GM12878 (cell line): ENCODE measurements at regions of chr22 and their contacts with region 1.

Region 1: GRCh38 chr22:21712894-21713712 is 22.5 kb downstream of the YPEL1 start:
- DNase-seq: peak; percentile 25
- ATAC-seq: peak; percentile 97
- H3K4me3 ChIP-seq: no peak overlapping the region
- H3K27ac ChIP-seq: no peak overlapping the region
- H3K4me1 ChIP-seq: no peaks in the 10 kb centered on the region
- H3K27me3 ChIP-seq: no peaks in the 10 kb centered on the region
- CTCF ChIP-seq: peak; percentile 79 to 91 (median 84)
- EP300 ChIP-seq: no peak
- POLR2A ChIP-seq: no peak
- RAD21 ChIP-seq: peak; percentile 93

Region 2: GRCh38 chr22:21947040-21948014 is 234.2 kb after region 1 on chr22:
- CTCF ChIA-PET with region 1: interaction called, 3 read pairs
- POLR2A ChIA-PET with region 1: no interaction called
- RAD21 ChIA-PET with region 1: interaction called, 11 read pairs
- SMC1A ChIA-PET with region 1: interaction called, 12 read pairs
- in situ Hi-C with region 1: loop called (anchors 5 kb)
- intact Hi-C with region 1: no loop called
- DNase-seq: no peak
- ATAC-seq: no peak
- H3K4me3 ChIP-seq: no peak overlapping the region
- H3K27ac ChIP-seq: no peak overlapping the region
- H3K4me1 ChIP-seq: peaks cover 3% of the 10 kb centered on the region; the same call in 1 of the 2 replicates
- H3K27me3 ChIP-seq: no peaks in the 10 kb centered on the region
- CTCF ChIP-seq: peak in 2 of 3 experiments; percentile 3 to 13; a peak in 2 of 6 replicates
- EP300 ChIP-seq: no peak
- POLR2A ChIP-seq: no peak
- RAD21 ChIP-seq: peak; percentile 18; the same call in 1 of the 2 replicates